ENCODE measurements at regions of chr17 and their contacts with region 1.

Region 1: DNA sequence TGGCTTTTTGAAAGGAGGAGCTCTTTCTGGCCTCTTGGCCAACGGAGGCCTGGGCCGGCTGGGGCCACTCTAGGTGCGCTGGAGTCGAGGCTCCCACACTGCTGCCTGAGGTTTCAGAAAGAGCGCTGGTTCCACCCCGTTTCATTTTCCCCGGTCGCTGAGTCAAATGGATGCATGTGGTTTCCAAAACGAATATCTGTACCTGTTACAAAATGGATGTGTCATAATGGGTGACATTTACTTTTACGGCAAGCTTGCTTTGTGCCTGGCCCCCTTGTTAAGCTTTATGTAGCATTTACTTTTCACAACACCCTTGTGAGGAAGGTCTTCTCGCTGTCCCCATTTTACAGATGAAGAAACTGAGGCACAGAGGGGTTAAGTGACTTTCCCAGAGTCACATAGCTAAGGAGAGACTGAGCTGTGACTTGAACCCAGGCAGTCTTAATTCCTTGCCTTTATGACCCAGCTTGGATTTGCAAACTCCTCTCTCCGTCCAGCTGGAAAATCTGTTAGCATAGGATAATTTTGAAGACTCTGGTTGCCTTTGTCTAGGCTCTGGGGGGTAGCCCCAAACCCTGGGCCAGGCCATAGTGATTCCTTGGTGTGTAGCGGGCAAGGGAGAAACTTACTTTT is 10.6 kb downstream of the KSR1 start:
- DNase-seq: peak; percentile 93
- H3K4me3 Mint-ChIP-seq: peak overlapping the region; percentile 83
- H3K27ac Mint-ChIP-seq: peak overlapping the region; percentile 97
- H3K4me1 Mint-ChIP-seq: peaks cover 82% of the 10 kb centered on the region
- H3K27me3 Mint-ChIP-seq: no peaks in the 10 kb centered on the region

Region 2: DNA sequence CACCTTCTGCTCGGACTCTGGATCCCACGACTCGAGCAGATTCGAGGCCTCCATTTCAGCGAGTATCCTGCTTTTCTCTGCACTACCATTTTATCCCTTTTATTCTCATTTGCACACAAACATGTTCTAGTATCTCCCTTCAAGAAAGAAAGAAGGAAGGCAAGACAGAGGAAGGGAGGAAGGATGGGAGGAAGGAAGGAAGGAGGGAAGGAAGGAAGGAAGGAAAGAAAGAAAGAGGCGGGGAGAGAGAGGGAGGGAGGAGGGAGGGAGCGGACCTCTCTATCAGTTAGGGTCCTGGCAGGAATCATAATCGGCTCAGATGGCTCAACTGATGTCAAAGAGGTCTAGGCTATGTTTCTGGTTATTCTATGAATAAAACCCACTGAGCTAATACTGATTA is 20.9 kb before region 1 on chr17:
- intact Hi-C with region 1: no loop called
- DNase-seq: no peak
- H3K4me3 Mint-ChIP-seq: no peak overlapping the region
- H3K27ac Mint-ChIP-seq: no peak overlapping the region
- H3K4me1 Mint-ChIP-seq: peaks cover 6% of the 10 kb centered on the region
- H3K27me3 Mint-ChIP-seq: peaks cover 16% of the 10 kb centered on the region

Region 3: GRCh38 chr17:27455914-27456680 is 10.8 kb before region 1 on chr17 and contains the start of gene KSR1:
- intact Hi-C with region 1: loop called (anchors 1 kb)
- DNase-seq: peak; percentile 95
- H3K4me3 Mint-ChIP-seq: peak within 1 kb of the TSS; percentile 98
- H3K27ac Mint-ChIP-seq: peak within 1 kb of the TSS; percentile 77
- H3K4me1 Mint-ChIP-seq: peaks cover 42% of the 10 kb centered on the region
- H3K27me3 Mint-ChIP-seq: no peaks in the 10 kb centered on the region
- total RNA-seq, gene KSR1: 104 TPM in 2 replicates

Region 4: GRCh38 chr17:27569257-27569722 is 102.4 kb after region 1 on chr17:
- intact Hi-C with region 1: loop called (anchors 2 kb)
- DNase-seq: peak; percentile 81
- H3K4me3 Mint-ChIP-seq: no peak overlapping the region
- H3K27ac Mint-ChIP-seq: peak overlapping the region; percentile 48
- H3K4me1 Mint-ChIP-seq: peaks cover 69% of the 10 kb centered on the region
- H3K27me3 Mint-ChIP-seq: no peaks in the 10 kb centered on the region